GM18951 (cell line): ENCODE measurements at regions of chr5 and their contacts with region 1.

Region 1: DNA sequence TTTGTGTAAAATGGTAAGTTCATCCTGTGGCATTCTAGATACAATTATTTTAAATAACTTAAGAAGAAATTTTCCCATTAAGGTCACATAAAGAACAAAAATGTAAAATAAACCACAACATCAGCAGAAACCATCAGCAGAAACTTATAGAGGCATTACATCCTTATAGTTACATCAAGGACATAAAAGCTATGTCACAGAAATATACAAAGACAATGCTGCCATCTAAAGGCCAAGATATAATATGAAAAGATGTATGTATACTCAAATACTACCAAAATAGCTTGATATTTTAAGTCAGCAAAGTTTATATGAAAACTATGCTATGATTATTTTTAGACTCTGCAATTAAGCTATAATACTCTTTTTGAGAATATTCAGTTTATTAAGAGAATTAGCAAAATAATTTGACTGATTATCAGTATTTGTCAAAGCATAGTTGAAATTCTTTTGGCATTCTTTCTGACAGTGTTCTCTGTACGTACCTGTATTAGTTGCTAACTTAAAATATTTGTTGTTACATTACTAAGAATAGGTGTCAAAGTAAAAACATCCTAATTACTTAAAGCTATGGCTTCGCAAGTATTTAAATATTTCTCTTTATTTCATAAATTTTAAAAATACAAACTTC is 36.2 kb downstream of the FBXL17 start:
- POLR2A ChIP-seq: no peak

Region 2: GRCh38 chr5:107840161-107840560 is 505.5 kb before region 1 on chr5:
- in situ Hi-C with region 1: no loop called
- POLR2A ChIP-seq: no peak

Region 3: GRCh38 chr5:108259306-108259705 is 86.3 kb before region 1 on chr5:
- in situ Hi-C with region 1: loop called (anchors 10 kb)
- POLR2A ChIP-seq: no peak

Region 4: DNA sequence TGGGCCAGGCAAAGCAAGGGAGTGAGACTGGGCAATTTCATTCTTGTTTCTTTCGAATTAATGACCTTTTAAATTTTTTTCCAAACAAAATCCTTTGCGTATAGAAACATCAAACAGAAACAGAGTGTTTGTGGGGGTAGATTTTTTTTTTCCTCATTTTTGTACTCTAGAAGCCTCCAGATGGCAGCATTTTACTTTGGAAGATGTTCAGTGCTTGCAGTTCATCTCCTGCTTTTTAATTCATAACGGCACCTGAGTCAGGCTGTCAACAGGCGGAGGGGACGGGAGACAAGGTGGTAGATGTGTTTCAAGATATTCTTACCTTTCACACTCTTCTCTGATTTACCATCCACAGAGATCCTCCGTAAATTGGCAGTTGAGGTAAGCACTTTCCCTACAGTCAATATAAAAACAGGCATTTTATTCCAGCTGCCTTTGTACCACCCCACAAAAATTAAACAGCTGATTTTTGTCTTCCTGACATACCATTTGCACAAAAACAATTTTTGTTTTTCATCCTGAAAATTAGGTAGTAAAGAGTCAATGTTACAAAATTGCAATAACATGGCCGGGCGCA is 135.8 kb after region 1 on chr5:
- in situ Hi-C with region 1: no loop called
- POLR2A ChIP-seq: no peak

Region 5: DNA sequence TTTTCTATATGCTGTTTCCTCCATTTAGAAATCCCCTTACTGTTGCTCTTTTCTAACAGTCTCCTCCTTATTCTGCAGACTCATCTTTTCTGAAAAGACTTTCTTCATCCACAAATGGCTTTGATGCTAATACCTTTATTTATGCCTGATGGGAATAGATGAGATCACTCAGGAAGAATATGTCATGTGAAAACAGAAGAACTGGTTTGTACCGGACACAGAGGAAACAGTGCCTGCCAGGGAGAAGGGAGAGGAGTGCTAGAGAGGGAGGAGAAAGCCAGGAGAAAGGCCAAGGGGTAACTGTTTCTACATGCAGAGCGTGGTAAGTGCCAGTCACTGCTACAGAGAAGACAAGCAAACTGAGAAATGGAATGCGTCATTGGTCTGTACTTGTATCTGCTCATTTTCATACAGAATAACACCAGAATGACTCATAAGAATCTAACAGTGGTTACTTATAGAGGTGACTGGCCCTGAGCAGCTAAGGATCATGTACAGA is 1110.0 kb after region 1 on chr5:
- in situ Hi-C with region 1: no loop called
- POLR2A ChIP-seq: no peak